GM10248 (cell line): ENCODE measurements at regions of chr17 and their contacts with region 1.

Region 1: DNA sequence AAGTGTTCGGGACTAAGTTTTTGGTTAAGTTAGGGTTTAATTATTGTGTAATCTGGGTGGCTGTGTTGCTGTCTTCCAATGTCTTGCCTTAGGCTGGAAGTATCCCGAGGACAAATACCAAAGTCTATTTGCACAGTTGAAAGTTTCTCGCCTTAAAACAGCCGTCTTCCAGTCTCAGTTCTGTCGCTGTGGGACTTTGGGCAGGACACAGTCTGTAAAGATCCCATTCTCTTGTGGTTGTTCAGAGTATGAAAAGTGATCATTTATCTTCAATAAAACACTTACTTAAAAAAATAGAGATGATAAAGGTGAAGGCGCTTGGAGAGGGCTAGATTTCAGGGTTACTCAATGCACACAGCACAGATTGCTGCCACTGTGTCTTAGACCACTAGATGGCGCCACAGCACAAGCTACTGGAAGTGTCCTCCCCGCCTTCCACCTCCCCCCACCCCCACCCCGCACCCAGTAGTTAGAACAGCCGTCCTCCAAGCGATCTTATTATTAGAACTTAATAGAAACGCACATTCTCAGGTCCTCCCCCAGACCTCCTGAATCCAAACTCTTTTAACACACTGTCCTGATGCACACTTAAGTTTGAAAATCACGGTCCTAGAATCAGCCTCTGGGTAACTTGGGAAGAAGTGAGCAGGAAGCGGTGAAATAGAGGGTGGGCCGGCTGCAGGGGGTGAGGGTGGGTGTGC is 45.9 kb downstream of the AKAP1 start:
- DNase-seq: peak; percentile 90
- CTCF ChIP-seq: peak; percentile 85

Region 2: GRCh38 chr17:57311281-57312216 is 180.6 kb after region 1 on chr17:
- CTCF ChIA-PET with region 1: no interaction called
- POLR2A ChIA-PET with region 1: no interaction called
- DNase-seq: no peak
- CTCF ChIP-seq: no peak

Region 3: GRCh38 chr17:57747221-57748017 is 616.5 kb after region 1 on chr17:
- CTCF ChIA-PET with region 1: interaction called, 14 read pairs
- POLR2A ChIA-PET with region 1: interaction called, 7 read pairs
- DNase-seq: peak; percentile 68
- CTCF ChIP-seq: peak; percentile 73

Region 4: GRCh38 chr17:57833179-57833939 is 702.4 kb after region 1 on chr17:
- CTCF ChIA-PET with region 1: interaction called, 32 read pairs
- POLR2A ChIA-PET with region 1: no interaction called
- DNase-seq: peak; percentile 69
- CTCF ChIP-seq: peak; percentile 90